Sigmoid colon (tissue), 7 donors: ENCODE measurements at regions of chr5 and their contacts with region 1.

Region 1: DNA sequence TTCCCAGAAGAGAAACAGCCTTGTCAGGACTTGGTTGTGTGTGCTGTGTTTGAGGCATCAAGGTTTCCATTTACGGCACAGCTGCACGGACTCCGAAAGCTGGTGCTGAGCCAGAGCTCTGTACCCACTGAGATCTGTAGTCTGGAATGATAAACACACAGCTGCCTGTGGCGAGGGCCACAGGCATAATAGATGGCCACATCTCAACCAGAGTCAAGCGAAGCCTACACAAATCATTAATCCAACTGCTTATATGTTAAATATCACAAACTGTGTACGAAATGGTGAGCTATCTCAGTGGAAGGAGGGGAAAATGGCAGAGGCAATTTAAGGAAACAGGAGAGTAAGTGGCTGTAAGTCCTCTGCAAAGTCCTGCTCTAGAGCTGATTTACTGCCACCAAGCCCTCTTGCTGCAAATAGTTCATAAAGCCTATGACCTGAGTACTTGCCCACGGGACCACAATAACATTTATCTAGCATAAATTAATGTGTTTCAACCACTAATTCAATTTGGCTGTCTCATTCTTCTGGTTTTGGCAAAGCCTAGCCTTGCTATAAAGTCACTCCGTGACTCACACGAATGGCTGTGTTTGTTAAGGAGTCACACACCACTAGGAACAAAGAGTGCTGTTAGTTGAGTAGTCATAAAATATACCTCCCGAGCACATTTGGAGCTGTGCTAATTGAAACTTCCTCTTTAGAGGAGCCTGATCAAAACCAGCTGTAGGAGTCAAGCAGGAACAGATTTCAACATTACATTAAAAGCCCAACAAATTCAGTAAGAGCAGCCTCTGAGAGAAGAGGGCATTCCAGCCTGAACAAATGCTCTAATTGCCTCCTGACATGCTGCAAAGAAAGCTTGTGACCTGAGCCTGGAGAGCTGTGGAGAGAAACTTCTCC is 738.6 kb upstream of the ZNF608 start:
- DNase-seq: peak; percentile 95
- H3K4me3 ChIP-seq: no peak overlapping the region
- H3K27ac ChIP-seq: peak overlapping the region; percentile 75 to 86 (median 84)
- H3K4me1 ChIP-seq: peaks cover 0 to 49% (median 28%) of the 10 kb centered on the region in 4 donors
- H3K27me3 ChIP-seq: no peaks in the 10 kb centered on the region
- CTCF ChIP-seq: no peak
- EP300 ChIP-seq: peak; percentile 67 to 96 (median 88)
- POLR2A ChIP-seq: no peak

Region 2: GRCh38 chr5:124697933-124698591 is 786.9 kb before region 1 on chr5:
- intact Hi-C with region 1: loop called (anchors 2 kb)
- DNase-seq: no peak
- H3K4me3 ChIP-seq: peak overlapping the region in 2 of 4 donors; percentile 4 to 22
- H3K27ac ChIP-seq: peak overlapping the region; percentile 71 to 89 (median 86)
- H3K4me1 ChIP-seq: peaks cover 0 to 72% (median 55%) of the 10 kb centered on the region in 4 donors
- H3K27me3 ChIP-seq: no peaks in the 10 kb centered on the region
- CTCF ChIP-seq: no peak
- EP300 ChIP-seq: peak in 2 of 4 donors; percentile 1 to 41
- POLR2A ChIP-seq: no peak

Region 3: DNA sequence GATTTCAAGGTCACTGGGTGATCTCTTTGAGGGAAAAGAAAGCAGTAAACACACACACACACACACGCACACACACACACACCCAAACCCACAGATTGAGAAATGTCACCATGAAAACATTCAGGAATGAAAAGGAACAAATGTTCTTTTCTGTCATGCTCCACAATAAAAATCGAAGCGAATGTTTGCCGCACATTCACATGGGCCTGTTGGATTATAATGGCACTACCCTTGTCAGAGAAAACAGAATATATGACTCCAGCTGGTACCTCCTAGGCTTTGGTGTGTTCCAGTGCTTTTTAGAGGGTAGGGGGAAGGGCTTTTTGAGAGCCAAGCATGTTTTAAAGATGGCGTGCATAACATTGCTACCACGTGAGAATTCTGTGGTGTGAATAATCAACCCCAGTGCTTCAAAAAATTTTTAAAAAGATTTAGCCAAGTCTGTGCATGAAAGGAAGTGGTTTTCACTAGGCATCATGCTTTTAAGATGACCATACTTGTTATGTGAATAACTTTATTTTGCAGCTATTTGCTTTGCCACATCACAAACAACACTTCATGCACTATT is 617.8 kb before region 1 on chr5:
- intact Hi-C with region 1: loop called (anchors 2 kb)
- DNase-seq: no peak
- H3K4me3 ChIP-seq: no peak overlapping the region
- H3K27ac ChIP-seq: peak overlapping the region in 1 of 4 donors; percentile 44
- H3K4me1 ChIP-seq: peaks cover 0 to 33% (median 29%) of the 10 kb centered on the region in 4 donors
- H3K27me3 ChIP-seq: no peaks in the 10 kb centered on the region
- CTCF ChIP-seq: no peak
- EP300 ChIP-seq: no peak
- POLR2A ChIP-seq: no peak

Region 4: DNA sequence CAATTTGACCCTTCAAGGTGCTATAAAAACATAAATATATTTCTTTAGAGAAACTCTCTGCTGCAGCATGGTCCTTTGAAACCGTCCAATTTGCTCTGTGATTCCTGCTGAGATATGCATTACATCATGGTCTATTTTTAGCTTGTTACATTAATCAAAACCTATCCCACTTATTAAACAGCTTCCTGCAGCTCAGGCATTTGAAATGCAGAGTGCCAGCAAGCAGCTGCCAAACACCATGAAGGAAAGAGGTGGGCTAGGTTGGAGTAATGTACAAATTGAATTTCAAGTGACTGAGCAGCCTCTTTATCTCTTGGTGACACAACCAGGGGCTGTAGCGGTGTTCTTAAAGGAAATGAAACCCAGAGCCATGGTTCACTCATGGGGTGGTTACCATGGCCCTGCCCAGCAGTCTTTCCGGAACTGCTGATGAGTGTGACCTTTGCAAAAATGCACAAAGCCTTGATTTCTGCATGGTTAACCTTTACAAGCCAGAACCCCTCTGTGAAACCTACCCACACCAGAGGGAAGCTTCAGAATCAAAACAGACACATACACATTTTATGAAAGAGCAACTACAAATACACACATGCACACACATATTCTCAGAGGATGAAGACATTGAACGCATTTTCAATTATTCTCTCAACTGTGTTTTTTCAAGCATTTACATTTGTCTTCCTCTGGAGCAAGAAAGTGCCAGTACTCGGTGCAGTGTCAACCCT is 582.7 kb before region 1 on chr5:
- intact Hi-C with region 1: loop called (anchors 10 kb)
- DNase-seq: no peak
- H3K4me3 ChIP-seq: no peak overlapping the region
- H3K27ac ChIP-seq: peak overlapping the region in 1 of 4 donors; percentile 25
- H3K4me1 ChIP-seq: peaks cover 0 to 27% (median 20%) of the 10 kb centered on the region in 4 donors
- H3K27me3 ChIP-seq: no peaks in the 10 kb centered on the region
- CTCF ChIP-seq: no peak
- EP300 ChIP-seq: no peak
- POLR2A ChIP-seq: no peak

Region 5: GRCh38 chr5:124935065-124935464 is 549.9 kb before region 1 on chr5:
- intact Hi-C with region 1: loop called (anchors 2 kb)
- DNase-seq: no peak
- H3K4me3 ChIP-seq: no peak overlapping the region
- H3K27ac ChIP-seq: no peak overlapping the region
- H3K4me1 ChIP-seq: peaks cover 0 to 28% (median 16%) of the 10 kb centered on the region in 4 donors
- H3K27me3 ChIP-seq: no peaks in the 10 kb centered on the region
- CTCF ChIP-seq: no peak
- EP300 ChIP-seq: no peak
- POLR2A ChIP-seq: no peak

Region 6: DNA sequence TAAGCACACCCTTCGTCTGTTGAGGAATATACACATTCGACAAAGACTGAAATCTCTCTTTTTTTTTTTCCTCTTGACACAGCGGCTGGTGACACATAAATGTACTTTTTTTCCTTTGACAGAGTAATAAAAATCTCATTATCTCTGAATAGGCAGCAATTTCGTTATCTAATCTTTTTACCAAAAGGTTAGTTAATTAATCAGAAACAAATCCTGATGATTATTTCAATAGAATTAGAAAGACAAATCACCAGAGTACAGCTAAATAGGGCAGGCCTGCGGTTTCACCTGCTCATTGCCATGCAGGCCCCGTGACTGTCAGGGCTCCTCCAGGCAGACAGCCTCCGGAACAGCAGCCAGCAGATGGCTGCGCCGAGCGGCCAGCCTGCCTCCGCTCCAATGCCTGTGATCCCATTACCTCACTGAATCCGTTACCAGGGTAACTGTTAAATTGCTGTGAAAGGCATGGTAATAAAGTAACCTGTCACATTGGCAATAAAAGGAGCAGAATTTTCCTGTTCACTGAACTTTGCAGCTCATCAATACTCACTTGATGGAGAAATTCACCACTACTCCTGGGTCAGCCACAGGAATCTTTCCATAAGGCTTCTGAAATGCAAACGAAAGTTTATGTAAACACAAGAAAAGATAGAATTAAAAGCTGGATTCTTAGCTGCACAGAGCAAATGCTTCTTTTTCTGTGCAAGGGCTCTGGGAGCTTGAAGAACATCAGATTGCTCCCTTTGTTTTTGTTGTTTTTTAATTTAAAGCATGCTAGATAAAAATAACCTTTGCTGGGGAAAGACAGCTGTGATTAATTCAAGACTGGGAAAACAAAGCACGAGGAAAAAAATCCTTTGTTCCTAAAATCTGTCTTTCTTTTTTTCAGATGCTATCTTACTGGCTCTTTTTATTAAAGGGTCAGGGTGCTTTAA is 72.2 kb before region 1 on chr5:
- intact Hi-C with region 1: loop called (anchors 1 kb)
- DNase-seq: peak; percentile 82
- H3K4me3 ChIP-seq: peak overlapping the region in 1 of 4 donors; percentile 1
- H3K27ac ChIP-seq: peak overlapping the region; percentile 66 to 84 (median 74)
- H3K4me1 ChIP-seq: peaks cover 0 to 64% (median 60%) of the 10 kb centered on the region in 4 donors
- H3K27me3 ChIP-seq: no peaks in the 10 kb centered on the region
- CTCF ChIP-seq: peak in 1 of 4 experiments; percentile 24
- EP300 ChIP-seq: peak in 1 of 4 donors; percentile 53
- POLR2A ChIP-seq: no peak